ENCODE measurements at regions of chr2 and their contacts with region 1.

Region 1: GRCh38 chr2:135741395-135742324 is at the start of gene UBXN4:
- DNase-seq: peak; percentile 96
- H3K4me3 Mint-ChIP-seq: peak within 1 kb of the TSS; percentile 99
- H3K27ac Mint-ChIP-seq: peak within 1 kb of the TSS; percentile 100
- H3K4me1 Mint-ChIP-seq: peaks cover 36% of the 10 kb centered on the region
- H3K27me3 Mint-ChIP-seq: no peaks in the 10 kb centered on the region
- total RNA-seq, gene UBXN4: 116 and 127 TPM in 2 replicates

Region 2: GRCh38 chr2:135797497-135798274 is 56.0 kb after region 1 on chr2:
- intact Hi-C with region 1: loop called (anchors 1 kb)
- DNase-seq: peak; percentile 92
- H3K4me3 Mint-ChIP-seq: no peak overlapping the region
- H3K27ac Mint-ChIP-seq: peak overlapping the region; percentile 34
- H3K4me1 Mint-ChIP-seq: peaks cover 15% of the 10 kb centered on the region
- H3K27me3 Mint-ChIP-seq: no peaks in the 10 kb centered on the region

Region 3: DNA sequence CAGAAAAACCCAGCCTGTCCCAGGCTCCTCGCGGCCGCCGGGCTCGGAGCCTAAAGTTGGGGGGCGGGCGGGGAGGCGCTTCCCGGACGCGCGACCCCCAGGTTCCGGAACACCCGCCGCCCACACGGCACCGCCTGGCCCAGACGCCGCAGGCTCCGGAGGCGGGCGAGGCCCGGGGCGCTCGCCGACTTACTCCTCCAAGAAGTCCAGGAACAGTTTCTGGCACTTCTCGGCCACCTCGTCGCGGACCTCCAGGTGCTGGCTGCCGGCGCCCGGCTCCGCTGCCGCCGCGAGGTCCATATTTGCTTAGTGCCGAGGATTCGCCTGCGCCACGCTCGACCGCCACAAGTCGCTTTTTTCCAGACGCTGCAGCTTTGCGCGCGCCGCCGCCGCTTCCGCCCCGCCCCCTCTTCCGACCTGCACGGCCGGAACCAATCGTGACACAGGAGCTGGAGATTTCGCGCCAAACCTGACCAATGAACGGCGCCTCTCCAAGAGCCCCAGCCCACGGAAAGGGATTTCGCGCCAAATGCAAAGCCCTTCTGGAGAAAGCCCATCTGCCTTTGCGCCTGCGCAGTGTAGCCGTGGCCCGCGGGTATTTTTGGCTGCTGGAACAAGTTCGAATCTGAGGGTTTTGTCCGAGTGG is 134.5 kb after region 1 on chr2 and contains the start of gene MCM6:
- intact Hi-C with region 1: loop called (anchors 1 kb)
- DNase-seq: peak; percentile 100
- H3K4me3 Mint-ChIP-seq: peak within 1 kb of the TSS; percentile 83
- H3K27ac Mint-ChIP-seq: peak within 1 kb of the TSS; percentile 97
- H3K4me1 Mint-ChIP-seq: peaks cover 31% of the 10 kb centered on the region
- H3K27me3 Mint-ChIP-seq: peaks cover 2% of the 10 kb centered on the region
- total RNA-seq, gene MCM6: 196 and 197 TPM in 2 replicates